ENCODE measurements at regions of chr6 and their contacts with region 1.

Region 1: DNA sequence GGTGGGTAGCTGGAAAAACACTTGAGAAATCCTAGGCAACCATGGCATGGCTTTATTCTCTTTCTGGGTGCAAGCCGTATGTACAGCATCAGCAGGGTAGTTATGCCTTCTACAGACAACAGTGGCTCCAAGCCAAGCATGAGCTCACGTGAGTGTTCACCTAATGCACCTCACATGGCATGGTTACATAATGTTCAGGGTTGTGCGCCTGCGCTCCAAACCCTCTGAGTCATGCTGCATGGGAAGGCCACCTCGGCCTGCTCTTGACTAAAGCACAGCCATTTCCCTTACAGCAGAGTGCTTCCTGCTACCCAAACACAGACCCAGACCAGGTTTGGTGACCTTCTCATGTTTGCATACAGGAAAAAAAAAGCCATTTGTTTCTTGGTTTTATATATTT is 96.2 kb downstream of the VIP start:
- DNase-seq: no peak

Region 2: DNA sequence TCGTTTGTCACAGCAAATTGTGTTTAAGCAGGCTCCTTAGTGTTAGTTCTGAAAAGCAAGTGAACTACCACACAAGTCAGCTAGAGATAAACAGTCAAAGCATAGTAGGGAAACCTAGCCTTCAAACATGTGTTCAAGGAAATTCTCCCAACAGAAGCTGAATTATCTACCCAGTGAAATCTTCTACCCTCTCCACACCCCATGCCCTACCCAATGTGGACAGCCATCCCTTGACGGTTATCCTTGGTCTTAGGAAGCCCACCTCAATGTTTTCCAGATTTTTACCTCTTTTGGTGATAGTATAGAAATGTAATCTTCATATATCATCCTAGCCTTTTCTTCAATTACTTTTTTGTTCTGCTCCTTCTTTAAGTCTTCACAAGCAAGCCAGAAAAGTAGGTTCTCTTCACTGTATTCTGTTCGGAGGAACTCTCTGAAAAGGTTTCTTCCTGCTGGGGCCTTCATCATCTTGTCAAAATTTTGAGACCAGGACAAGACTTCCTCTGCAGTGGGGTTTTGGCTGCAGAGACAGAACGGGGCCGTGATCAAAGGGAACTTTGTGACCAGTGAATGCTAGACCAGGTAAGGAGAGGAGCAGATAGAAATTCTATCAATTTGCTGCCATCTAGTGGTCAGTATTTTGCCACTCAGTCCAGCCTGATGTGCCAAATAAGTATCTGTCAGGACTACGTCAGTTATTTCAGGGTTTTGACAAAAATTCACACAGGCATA is 177.3 kb after region 1 on chr6:
- intact Hi-C with region 1: loop called in 1 of 2 experiments (anchors 5 kb)
- DNase-seq: no peak

Measured in posterior vena cava (tissue), 2 donors.